IMR-90 (cell line): ENCODE measurements at regions of chr3 and their contacts with region 1.

Region 1: DNA sequence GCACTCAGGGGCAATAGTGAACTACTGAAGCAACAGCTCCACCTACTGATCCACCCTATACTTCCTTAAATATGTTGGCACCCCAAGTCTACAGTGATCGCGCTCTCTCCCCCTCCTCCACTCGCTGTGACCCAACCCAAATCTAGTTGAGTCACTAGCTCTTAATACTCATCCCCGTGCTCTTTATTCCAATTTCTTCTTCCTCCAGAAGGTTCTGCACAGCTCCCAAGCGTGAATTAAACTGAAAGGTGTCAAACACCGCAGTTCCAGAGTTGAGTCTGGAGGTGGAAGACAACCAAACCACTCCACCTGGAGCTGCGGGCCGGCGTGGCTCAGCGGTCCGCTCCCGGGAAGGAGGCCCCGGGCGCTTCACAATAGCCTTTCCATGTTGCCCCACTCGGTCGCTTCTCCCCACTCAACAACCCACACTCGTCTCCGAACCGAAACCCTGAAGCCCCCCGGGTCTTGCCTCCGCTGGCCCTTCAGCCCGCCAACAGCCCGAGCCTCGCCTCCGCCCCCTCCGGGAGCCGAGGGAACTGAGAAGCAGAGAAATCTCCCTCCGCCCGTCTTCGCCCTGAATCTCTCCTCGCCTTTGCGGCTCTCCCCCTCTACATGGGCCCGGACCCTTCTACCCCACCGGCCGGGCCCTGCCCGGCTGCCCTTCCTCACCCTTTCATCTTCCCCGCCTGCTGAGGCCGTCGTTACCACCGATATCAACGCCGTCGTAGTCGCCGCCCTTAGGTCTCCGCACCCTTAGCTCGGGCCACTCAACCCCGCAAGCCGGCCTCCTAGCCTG is 578 bp downstream of the NAA50 start:
- DNase-seq: peak; percentile 90
- ATAC-seq: peak; percentile 59
- H3K4me3 ChIP-seq: peak overlapping the region; percentile 82
- H3K27ac ChIP-seq: peak overlapping the region; percentile 85
- H3K4me1 ChIP-seq: peaks cover 6% of the 10 kb centered on the region; the same call in 1 of the 2 replicates
- H3K27me3 ChIP-seq: no peaks in the 10 kb centered on the region
- CTCF ChIP-seq: peak; percentile 80
- POLR2A ChIP-seq: peak; percentile 42
- RAD21 ChIP-seq: peak; percentile 74

Region 2: DNA sequence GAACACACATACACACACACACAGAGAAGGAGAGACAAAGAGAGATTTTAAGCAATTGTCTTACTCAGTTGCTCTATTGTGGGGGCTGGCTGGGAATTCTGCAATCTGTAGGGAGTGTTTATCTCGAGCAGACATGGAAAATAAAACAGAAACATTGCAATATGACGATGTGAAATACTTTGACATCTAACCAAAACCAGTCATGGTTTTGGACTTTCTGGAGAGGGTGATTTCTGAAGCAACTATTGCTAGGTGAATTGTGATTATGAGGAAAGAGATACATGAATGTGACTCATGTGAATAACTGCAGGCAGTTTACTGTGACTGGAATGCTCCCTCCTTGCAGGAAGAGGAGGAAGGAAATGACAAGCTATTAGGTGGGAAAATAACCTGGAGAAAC is 1898.8 kb before region 1 on chr3:
- CTCF ChIA-PET with region 1: no interaction called
- POLR2A ChIA-PET with region 1: no interaction called
- dilution Hi-C with region 1: no loop called
- in situ Hi-C with region 1: no loop called
- intact Hi-C with region 1: no loop called
- DNase-seq: peak; percentile 91
- ATAC-seq: peak; percentile 65
- H3K4me3 ChIP-seq: no peak overlapping the region
- H3K27ac ChIP-seq: no peak overlapping the region
- H3K4me1 ChIP-seq: peaks cover 8% of the 10 kb centered on the region; the same call in 1 of the 2 replicates
- H3K27me3 ChIP-seq: no peaks in the 10 kb centered on the region
- CTCF ChIP-seq: no peak
- POLR2A ChIP-seq: no peak
- RAD21 ChIP-seq: no peak

Region 3: DNA sequence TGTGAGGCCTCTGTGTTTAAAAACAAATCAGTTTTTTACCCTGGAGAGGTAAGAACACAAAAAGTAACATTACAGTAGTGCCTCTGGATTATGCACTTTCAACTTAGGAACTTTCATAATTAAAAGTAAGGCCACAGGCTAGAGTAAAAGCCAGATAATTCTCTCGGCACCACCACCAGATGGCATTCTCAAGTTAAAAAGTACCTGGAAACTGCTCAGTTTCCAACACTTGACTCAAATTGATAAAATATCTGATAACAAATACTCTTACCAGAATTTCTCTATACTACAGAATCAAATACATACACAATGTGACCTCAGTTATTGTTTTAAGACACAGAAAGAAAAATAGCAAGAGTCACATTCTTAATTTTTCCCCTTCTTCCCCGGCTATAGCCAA is 250.4 kb before region 1 on chr3:
- CTCF ChIA-PET with region 1: interaction called, 5 read pairs
- POLR2A ChIA-PET with region 1: no interaction called
- dilution Hi-C with region 1: no loop called
- in situ Hi-C with region 1: no loop called
- intact Hi-C with region 1: loop called (anchors 2 kb)
- DNase-seq: peak; percentile 44
- ATAC-seq: no peak
- H3K4me3 ChIP-seq: no peak overlapping the region
- H3K27ac ChIP-seq: no peak overlapping the region
- H3K4me1 ChIP-seq: peaks cover 7% of the 10 kb centered on the region
- H3K27me3 ChIP-seq: no peaks in the 10 kb centered on the region
- CTCF ChIP-seq: peak; percentile 44
- POLR2A ChIP-seq: no peak
- RAD21 ChIP-seq: peak; percentile 31; the same call in 1 of the 2 replicates

Region 4: GRCh38 chr3:113783463-113783862 is 38.0 kb after region 1 on chr3:
- CTCF ChIA-PET with region 1: interaction called, 3 read pairs
- POLR2A ChIA-PET with region 1: no interaction called
- dilution Hi-C with region 1: no loop called
- in situ Hi-C with region 1: no loop called
- intact Hi-C with region 1: loop called (anchors 1 kb)
- DNase-seq: peak; percentile 98
- ATAC-seq: peak; percentile 97
- H3K4me3 ChIP-seq: no peak overlapping the region
- H3K27ac ChIP-seq: no peak overlapping the region
- H3K4me1 ChIP-seq: peaks cover 2% of the 10 kb centered on the region; the same call in 1 of the 2 replicates
- H3K27me3 ChIP-seq: no peaks in the 10 kb centered on the region
- CTCF ChIP-seq: no peak
- POLR2A ChIP-seq: peak; percentile 41; the same call in 1 of the 2 replicates
- RAD21 ChIP-seq: no peak

Region 5: GRCh38 chr3:113838631-113839209 is 93.2 kb after region 1 on chr3 and contains the start of gene GRAMD1C:
- CTCF ChIA-PET with region 1: interaction called, 4 read pairs
- POLR2A ChIA-PET with region 1: no interaction called
- dilution Hi-C with region 1: no loop called
- in situ Hi-C with region 1: no loop called
- intact Hi-C with region 1: loop called (anchors 2 kb)
- DNase-seq: peak; percentile 88
- ATAC-seq: peak; percentile 98
- H3K4me3 ChIP-seq: peak within 1 kb of the TSS; percentile 95
- H3K27ac ChIP-seq: peak within 1 kb of the TSS; percentile 59; the same call in 1 of the 2 replicates
- H3K4me1 ChIP-seq: no peaks in the 10 kb centered on the region
- H3K27me3 ChIP-seq: no peaks in the 10 kb centered on the region
- CTCF ChIP-seq: peak; percentile 92
- POLR2A ChIP-seq: 0 out of 2 replicates have a peak, but pooled peaks have one; percentile 25
- RAD21 ChIP-seq: peak; percentile 75
- total RNA-seq, gene GRAMD1C: 5.0 and 9.4 TPM in 2 replicates

Region 6: DNA sequence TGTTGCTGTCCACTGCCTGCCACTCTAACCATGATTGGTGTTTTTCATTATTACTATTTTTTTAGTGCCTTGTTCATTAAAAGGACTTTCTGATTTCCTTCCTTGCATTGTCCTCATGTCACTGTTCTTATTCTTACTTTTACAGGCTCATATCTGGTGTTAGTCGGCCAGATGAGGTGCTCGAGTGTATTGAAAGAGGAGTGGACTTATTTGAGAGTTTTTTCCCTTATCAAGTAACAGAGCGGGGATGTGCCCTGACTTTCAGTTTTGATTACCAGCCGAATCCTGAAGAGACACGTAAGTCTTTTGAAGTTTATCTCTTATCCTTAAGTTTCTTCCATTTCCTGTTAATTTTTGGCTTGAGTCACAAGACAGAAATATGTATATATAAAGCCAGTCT is 334.3 kb after region 1 on chr3:
- CTCF ChIA-PET with region 1: no interaction called
- POLR2A ChIA-PET with region 1: no interaction called
- dilution Hi-C with region 1: no loop called
- in situ Hi-C with region 1: no loop called
- intact Hi-C with region 1: loop called (anchors 5 kb)
- DNase-seq: peak; percentile 72
- ATAC-seq: peak; percentile 75
- H3K4me3 ChIP-seq: peak overlapping the region; percentile 26; the same call in 1 of the 2 replicates
- H3K27ac ChIP-seq: peak overlapping the region; percentile 82
- H3K4me1 ChIP-seq: peaks cover 6% of the 10 kb centered on the region
- H3K27me3 ChIP-seq: no peaks in the 10 kb centered on the region
- CTCF ChIP-seq: no peak
- POLR2A ChIP-seq: no peak
- RAD21 ChIP-seq: no peak